Activated B cell treated with CpG ODN at 0.5 μM for 24 hours (primary cell): ENCODE measurements at regions of chr3 and their contacts with region 1.

Region 1: GRCh38 chr3:81760924-81761903 is at the start of gene GBE1:
- DNase-seq: peak; percentile 93
- ATAC-seq: peak; percentile 85
- H3K4me3 Mint-ChIP-seq: peak within 1 kb of the TSS; percentile 98
- H3K27ac Mint-ChIP-seq: peak within 1 kb of the TSS; percentile 99
- H3K4me1 Mint-ChIP-seq: peaks cover 35% of the 10 kb centered on the region
- H3K27me3 Mint-ChIP-seq: no peaks in the 10 kb centered on the region
- CTCF ChIP-seq: no peak
- total RNA-seq, gene GBE1: 32.5 and 33.8 TPM in 2 replicates

Region 2: DNA sequence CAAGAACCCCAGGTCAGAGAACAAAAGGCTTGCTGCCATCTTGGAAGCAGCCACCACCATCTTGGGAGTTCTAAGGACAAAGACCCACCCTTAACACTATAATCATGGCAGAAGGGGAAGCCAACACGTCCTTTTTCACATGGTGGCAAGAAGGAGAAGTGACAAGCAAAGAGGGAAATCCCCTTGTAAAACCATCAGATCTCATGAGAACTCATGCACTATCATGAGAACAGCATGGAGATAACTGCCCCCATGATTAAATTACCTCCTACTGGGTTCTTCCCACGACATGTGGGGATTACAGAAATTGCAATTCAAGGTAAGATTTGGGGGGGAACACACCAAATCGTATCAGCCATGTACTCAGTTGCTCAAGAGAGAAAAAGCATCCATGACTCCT is 21.4 kb after region 1 on chr3:
- CTCF ChIA-PET with region 1: no interaction called
- POLR2A ChIA-PET with region 1: no interaction called
- intact Hi-C with region 1: loop called (anchors 2 kb)
- DNase-seq: no peak
- ATAC-seq: peak; percentile 65
- H3K4me3 Mint-ChIP-seq: no peak overlapping the region
- H3K27ac Mint-ChIP-seq: no peak overlapping the region
- H3K4me1 Mint-ChIP-seq: peaks cover 7% of the 10 kb centered on the region
- H3K27me3 Mint-ChIP-seq: no peaks in the 10 kb centered on the region
- CTCF ChIP-seq: no peak

Region 3: DNA sequence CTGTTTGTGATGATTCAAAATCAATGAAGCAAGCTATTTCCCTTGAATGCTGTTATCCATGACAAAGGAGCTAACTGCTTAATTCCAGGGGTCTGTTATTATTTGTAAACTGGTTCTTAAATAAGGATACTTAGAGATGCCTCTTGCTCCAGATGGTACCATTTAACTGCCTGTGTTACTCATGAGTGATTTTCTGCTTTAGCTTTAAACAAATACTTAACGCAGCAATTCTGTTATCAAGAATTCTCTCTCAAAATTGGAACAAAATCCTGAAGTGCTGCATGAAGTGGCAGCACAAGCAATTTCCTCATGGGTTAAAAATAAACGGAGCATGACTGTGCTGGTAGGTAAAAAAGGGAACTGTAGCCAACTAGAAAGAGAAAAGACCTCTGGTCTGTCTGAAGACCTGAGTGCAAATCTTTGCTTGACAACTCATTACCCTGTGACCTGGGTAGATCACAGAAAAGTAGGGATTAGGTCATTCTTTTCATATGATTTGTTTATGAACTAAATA is 62.7 kb after region 1 on chr3:
- CTCF ChIA-PET with region 1: no interaction called
- POLR2A ChIA-PET with region 1: no interaction called
- intact Hi-C with region 1: loop called (anchors 1 kb)
- DNase-seq: no peak
- ATAC-seq: peak; percentile 82
- H3K4me3 Mint-ChIP-seq: no peak overlapping the region
- H3K27ac Mint-ChIP-seq: no peak overlapping the region
- H3K4me1 Mint-ChIP-seq: peaks cover 10% of the 10 kb centered on the region
- H3K27me3 Mint-ChIP-seq: no peaks in the 10 kb centered on the region
- CTCF ChIP-seq: no peak

Region 4: GRCh38 chr3:82685761-82686160 is 924.5 kb after region 1 on chr3:
- CTCF ChIA-PET with region 1: no interaction called
- POLR2A ChIA-PET with region 1: no interaction called
- intact Hi-C with region 1: no loop called
- DNase-seq: no peak
- ATAC-seq: no peak
- H3K4me3 Mint-ChIP-seq: no peak overlapping the region
- H3K27ac Mint-ChIP-seq: no peak overlapping the region
- H3K4me1 Mint-ChIP-seq: no peaks in the 10 kb centered on the region
- H3K27me3 Mint-ChIP-seq: no peaks in the 10 kb centered on the region
- CTCF ChIP-seq: no peak